Mammary epithelial cell (primary cell): ENCODE measurements at regions of chr6 and their contacts with region 1.

Region 1: DNA sequence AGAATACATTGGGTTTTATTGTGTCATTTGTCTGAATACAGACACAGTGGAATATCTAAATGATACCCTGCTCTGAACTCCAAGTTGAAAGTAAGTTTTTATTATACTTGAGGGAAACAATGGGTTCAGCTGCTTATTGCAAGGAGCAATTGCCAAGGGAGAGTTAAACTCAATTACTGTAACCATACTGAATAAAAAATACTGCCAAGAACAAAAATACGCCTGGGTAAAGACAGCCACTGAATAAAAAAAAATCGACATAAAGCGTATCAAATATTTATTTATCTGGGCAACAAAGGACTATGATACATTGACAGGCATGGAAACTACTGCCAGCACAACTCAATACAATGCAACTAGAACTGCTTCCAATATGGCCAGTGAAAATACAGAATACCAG is 18.1 kb downstream of the TFAP2A start:
- DNase-seq: no peak
- H3K4me3 ChIP-seq: no peak overlapping the region
- H3K27ac ChIP-seq: no peak overlapping the region
- H3K4me1 ChIP-seq: peaks cover 31% of the 10 kb centered on the region
- H3K27me3 ChIP-seq: no peaks in the 10 kb centered on the region
- CTCF ChIP-seq: no peak

Region 2: GRCh38 chr6:10210052-10210451 is 186.7 kb before region 1 on chr6:
- CTCF ChIA-PET with region 1: interaction called, 23 read pairs
- dilution Hi-C with region 1: no loop called
- in situ Hi-C with region 1: no loop called
- intact Hi-C with region 1: no loop called
- DNase-seq: peak; percentile 59
- H3K4me3 ChIP-seq: no peak overlapping the region
- H3K27ac ChIP-seq: no peak overlapping the region
- H3K4me1 ChIP-seq: peaks cover 9% of the 10 kb centered on the region
- H3K27me3 ChIP-seq: no peaks in the 10 kb centered on the region
- CTCF ChIP-seq: no peak

Region 3: GRCh38 chr6:10347561-10348327 is 49.0 kb before region 1 on chr6:
- CTCF ChIA-PET with region 1: no interaction called
- dilution Hi-C with region 1: no loop called
- in situ Hi-C with region 1: no loop called
- intact Hi-C with region 1: no loop called
- DNase-seq: peak; percentile 99
- H3K4me3 ChIP-seq: no peak overlapping the region
- H3K27ac ChIP-seq: peak overlapping the region; percentile 98
- H3K4me1 ChIP-seq: peaks cover 14% of the 10 kb centered on the region
- H3K27me3 ChIP-seq: no peaks in the 10 kb centered on the region
- CTCF ChIP-seq: no peak

Region 4: DNA sequence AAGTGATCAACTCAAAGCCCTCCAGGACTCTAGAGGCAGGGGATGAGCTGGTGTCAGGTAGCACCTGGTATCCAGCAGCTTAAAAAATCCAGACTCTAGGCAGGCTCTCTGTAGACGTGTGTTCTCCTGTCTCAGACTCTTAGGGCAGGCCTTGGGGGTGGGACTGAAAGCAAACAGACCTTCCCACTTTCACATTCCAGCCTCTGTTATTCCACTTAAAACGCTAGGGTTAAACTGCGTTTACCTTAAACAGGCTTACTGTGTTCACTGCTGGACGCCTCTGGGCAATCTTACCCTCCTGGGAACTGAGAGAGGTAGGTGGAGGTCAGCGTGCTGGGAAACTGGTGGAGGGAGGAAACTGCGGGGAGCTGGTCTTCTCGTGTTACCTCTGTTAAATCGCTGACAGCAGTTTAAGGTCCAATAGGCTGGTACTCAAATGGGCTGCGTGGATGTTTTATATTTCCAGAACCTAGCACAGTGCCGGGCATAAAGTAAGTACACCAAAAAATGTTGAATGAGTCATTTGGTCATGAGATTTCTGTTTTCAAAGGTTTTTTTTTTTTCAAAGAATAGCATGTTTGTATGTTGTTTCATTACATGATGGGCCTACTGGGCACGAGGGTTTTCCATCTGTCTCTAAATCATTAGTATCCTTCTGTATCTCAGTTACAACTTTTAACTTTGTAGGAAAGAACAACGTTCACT is 124.5 kb after region 1 on chr6 and contains the start of gene GCNT2:
- CTCF ChIA-PET with region 1: no interaction called
- dilution Hi-C with region 1: no loop called
- in situ Hi-C with region 1: no loop called
- intact Hi-C with region 1: no loop called
- DNase-seq: no peak
- H3K4me3 ChIP-seq: no peak within 1 kb of the TSS
- H3K27ac ChIP-seq: no peak within 1 kb of the TSS
- H3K4me1 ChIP-seq: no peaks in the 10 kb centered on the region
- H3K27me3 ChIP-seq: no peaks in the 10 kb centered on the region
- CTCF ChIP-seq: no peak
- total RNA-seq, gene GCNT2: 0.33 TPM in 1 of 2 donors, not detected in the other